ENCODE measurements at regions of chr13 and their contacts with region 1.

Region 1: DNA sequence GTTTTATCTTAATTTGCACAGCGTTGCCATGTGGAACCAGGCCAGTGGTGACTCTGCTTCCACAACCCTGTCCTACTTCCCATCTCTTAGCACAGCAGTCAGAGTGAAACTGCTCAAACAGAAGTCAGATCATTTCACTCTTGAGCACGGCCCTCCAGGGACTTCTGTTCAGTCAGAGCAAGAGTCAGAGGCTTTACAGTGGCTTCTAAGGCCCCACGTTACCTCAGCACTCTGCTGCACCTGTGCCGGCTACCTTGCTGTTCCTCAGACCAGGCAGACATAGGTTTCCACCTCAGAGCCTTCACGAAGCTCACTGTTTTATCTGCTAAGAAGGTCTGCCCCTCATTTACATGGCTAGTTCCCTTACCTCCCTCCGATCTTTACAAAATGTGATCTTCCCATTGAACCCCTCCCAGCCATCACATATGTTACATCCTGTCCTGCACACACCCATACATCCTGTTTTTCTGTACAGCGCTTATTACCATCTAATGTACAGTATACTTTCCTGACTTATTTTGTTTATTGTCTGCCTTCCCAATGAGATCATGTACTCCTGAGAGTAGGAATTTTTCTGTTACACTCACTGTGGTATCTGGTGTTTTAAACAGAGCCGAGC is 41.6 kb downstream of the TM9SF2 start:
- DNase-seq: peak in 4 of 10 donors; percentile 11 to 21 (median 19)
- ATAC-seq: peak; percentile 82 to 85
- H3K4me3 Mint-ChIP-seq: peak overlapping the region; percentile 15 to 72 (median 58)
- H3K27ac Mint-ChIP-seq: peak overlapping the region; percentile 33 to 96 (median 82)
- H3K4me1 Mint-ChIP-seq: peaks cover 11 to 44% (median 30%) of the 10 kb centered on the region in 4 donors
- H3K27me3 Mint-ChIP-seq: no peaks in the 10 kb centered on the region

Region 2: DNA sequence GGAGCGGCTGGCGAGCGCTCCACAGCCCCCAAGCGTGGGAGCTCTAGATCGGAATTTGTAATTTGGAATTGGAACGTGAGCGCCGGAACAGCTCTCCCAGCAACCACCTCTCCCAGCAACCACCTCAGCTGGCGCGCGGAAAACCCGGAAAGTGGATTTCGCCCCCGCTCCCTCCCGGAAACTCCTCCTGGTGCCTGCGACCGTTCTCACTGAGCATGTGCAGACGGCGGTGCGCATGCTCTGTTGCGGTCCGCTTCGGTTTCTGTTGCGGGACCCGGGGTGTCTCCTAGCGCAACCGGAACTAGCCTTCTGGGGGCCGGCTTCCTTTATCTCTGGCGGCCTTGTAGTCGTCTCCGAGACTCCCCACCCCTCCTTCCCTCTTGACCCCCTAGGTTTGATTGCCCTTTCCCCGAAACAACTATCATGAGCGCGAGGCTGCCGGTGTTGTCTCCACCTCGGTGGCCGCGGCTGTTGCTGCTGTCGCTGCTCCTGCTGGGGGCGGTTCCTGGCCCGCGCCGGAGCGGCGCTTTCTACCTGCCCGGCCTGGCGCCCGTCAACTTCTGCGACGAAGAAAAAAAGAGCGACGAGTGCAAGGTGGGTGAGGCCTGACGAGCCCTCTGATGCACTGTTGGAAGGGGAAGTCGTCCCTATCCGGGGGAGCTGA is 41.6 kb before region 1 on chr13 and contains the start of gene TM9SF2:
- POLR2A ChIA-PET with region 1: interaction called, 16 read pairs
- DNase-seq: peak; percentile 94 to 99 (median 96)
- ATAC-seq: peak; percentile 53 to 57
- H3K4me3 Mint-ChIP-seq: peak within 1 kb of the TSS; percentile 95 to 100 (median 98)
- H3K27ac Mint-ChIP-seq: peak within 1 kb of the TSS; percentile 94 to 99 (median 99)
- H3K4me1 Mint-ChIP-seq: peaks cover 31 to 90% (median 80%) of the 10 kb centered on the region in 4 donors
- H3K27me3 Mint-ChIP-seq: peaks cover 0 to 2% (median 0%) of the 10 kb centered on the region in 5 donors
- polyA plus RNA-seq, gene TM9SF2: 41.5 to 57.4 (median 50.2) TPM